Activated B cell treated with CpG ODN at 0.5 μM for 24 hours (primary cell): ENCODE measurements at regions of chr2 and their contacts with region 1.

Region 1: DNA sequence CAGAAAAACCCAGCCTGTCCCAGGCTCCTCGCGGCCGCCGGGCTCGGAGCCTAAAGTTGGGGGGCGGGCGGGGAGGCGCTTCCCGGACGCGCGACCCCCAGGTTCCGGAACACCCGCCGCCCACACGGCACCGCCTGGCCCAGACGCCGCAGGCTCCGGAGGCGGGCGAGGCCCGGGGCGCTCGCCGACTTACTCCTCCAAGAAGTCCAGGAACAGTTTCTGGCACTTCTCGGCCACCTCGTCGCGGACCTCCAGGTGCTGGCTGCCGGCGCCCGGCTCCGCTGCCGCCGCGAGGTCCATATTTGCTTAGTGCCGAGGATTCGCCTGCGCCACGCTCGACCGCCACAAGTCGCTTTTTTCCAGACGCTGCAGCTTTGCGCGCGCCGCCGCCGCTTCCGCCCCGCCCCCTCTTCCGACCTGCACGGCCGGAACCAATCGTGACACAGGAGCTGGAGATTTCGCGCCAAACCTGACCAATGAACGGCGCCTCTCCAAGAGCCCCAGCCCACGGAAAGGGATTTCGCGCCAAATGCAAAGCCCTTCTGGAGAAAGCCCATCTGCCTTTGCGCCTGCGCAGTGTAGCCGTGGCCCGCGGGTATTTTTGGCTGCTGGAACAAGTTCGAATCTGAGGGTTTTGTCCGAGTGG is at the start of gene MCM6:
- DNase-seq: peak; percentile 87
- ATAC-seq: peak; percentile 90
- H3K4me3 Mint-ChIP-seq: peak within 1 kb of the TSS; percentile 95
- H3K27ac Mint-ChIP-seq: peak within 1 kb of the TSS; percentile 90
- H3K4me1 Mint-ChIP-seq: peaks cover 24% of the 10 kb centered on the region
- H3K27me3 Mint-ChIP-seq: no peaks in the 10 kb centered on the region
- CTCF ChIP-seq: no peak
- total RNA-seq, gene MCM6: 27.9 and 28.9 TPM in 2 replicates

Region 2: GRCh38 chr2:135741395-135742324 is 134.5 kb before region 1 on chr2 and contains the start of gene UBXN4:
- CTCF ChIA-PET with region 1: no interaction called
- POLR2A ChIA-PET with region 1: interaction called, 3 read pairs
- intact Hi-C with region 1: loop called (anchors 1 kb)
- DNase-seq: peak; percentile 81
- ATAC-seq: peak; percentile 87
- H3K4me3 Mint-ChIP-seq: peak within 1 kb of the TSS; percentile 99
- H3K27ac Mint-ChIP-seq: peak within 1 kb of the TSS; percentile 99
- H3K4me1 Mint-ChIP-seq: peaks cover 40% of the 10 kb centered on the region
- H3K27me3 Mint-ChIP-seq: no peaks in the 10 kb centered on the region
- CTCF ChIP-seq: no peak
- total RNA-seq, gene UBXN4: 87.8 and 107 TPM in 2 replicates

Region 3: DNA sequence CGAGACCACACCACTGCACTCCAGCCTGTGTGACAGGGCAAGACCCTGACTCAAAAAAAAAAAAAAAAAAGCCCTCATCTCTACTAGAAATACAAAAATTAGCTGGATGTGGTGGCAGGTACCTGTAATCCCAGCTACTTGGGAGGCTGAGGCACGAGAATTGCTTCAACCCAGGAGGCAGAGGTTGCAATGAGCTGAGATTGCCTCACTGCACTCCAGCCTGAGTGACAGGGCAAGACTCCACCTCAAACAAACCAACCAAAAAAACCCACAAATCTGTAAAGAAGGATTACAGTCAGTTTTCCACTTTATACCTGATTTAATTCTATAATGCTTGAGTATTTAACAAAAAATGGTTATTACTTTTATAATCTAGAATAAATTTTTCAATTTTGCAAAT is 99.5 kb after region 1 on chr2:
- CTCF ChIA-PET with region 1: no interaction called
- POLR2A ChIA-PET with region 1: interaction called, 11 read pairs
- intact Hi-C with region 1: no loop called
- DNase-seq: no peak
- ATAC-seq: peak; percentile 14
- H3K4me3 Mint-ChIP-seq: no peak overlapping the region
- H3K27ac Mint-ChIP-seq: no peak overlapping the region
- H3K4me1 Mint-ChIP-seq: peaks cover 61% of the 10 kb centered on the region
- H3K27me3 Mint-ChIP-seq: no peaks in the 10 kb centered on the region
- CTCF ChIP-seq: no peak